Activated T-helper 2 cell treated with anti-CD3 and anti-CD28 coated beads, Interferon-gamma antibody, Interleukin-2, Interleukin-4, amounts not matched to agents 10 μg/mL and 5 μg/mL and 100 μg/mL, durations not matched to agents 14 hours and 24 hours and 36 hours (primary cell): ENCODE measurements at regions of chr1 and their contacts with region 1.

Region 1: DNA sequence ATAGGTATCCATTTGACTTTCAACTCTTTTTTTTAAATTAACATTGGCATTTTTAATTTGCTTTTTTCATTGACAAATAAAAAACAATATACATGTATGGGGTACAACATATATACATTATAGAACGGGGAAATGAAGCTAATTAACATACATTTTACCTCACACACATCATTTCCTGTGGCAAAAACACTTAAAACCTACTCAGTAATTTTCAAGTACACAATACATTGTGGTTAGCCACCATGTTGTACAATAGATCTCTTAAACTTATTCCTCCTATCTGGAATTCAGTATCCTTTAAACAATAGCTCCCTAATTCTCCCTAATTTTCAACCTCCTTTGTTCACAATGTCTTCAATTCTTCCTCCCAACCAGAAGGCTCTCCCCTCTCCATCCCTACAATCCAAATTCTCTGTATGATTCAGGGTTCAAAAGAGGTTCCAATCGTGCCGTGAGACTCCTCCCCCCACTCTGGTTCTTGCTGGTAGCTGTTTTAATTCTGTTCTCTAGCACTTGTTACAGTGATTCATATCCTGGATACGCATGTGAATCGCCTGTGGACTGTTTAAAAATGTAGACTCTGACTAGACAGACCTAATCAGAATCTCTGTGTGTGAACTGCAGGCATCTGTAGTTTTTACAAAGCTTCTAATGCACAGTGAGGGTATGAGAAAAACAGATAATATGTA is 87.6 kb upstream of the DUSP10 start:
- DNase-seq: peak; percentile 40
- H3K4me3 Mint-ChIP-seq: peak overlapping the region; percentile 67
- H3K27ac Mint-ChIP-seq: peak overlapping the region; percentile 97
- H3K4me1 Mint-ChIP-seq: peaks cover 70% of the 10 kb centered on the region
- H3K27me3 Mint-ChIP-seq: no peaks in the 10 kb centered on the region

Region 2: DNA sequence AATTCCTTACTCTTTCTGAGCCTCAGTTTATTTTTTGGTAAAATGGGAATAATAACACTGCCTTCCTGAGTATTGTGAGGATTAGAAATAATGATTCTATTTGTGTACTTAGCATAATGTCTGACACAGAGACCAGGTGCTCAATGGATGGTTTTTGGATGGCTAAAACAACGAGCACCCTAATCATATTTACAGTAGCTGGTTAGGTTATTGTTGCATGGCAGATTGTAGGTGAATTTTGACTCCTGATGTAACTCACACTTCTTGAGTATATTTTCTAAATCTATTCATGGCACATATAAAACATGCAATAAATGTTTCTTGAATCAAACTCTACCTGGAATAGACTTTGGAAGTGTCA is 75.7 kb before region 1 on chr1:
- intact Hi-C with region 1: loop called (anchors 1 kb)
- DNase-seq: no peak
- H3K4me3 Mint-ChIP-seq: peak overlapping the region; percentile 28
- H3K27ac Mint-ChIP-seq: peak overlapping the region; percentile 81
- H3K4me1 Mint-ChIP-seq: peaks cover 50% of the 10 kb centered on the region
- H3K27me3 Mint-ChIP-seq: no peaks in the 10 kb centered on the region

Region 3: DNA sequence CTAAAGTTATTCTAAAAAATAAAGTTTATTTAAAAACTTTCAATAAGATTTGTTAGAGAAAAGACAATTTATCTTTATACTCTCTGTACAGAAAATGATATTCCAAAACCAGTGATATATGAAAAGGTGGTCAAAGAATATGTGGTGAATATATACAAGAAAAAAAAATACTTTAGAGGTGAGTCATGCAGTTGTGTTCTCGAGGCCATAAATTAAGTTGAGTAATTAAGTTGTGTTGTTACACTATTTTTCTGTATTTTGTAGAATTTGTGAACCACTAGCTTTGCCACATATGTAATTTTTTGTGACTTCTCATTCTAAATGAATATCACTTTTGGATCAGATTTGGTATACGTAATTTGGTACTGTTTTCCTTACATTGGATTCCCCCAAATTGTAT is 63.9 kb before region 1 on chr1:
- intact Hi-C with region 1: no loop called
- DNase-seq: no peak
- H3K4me3 Mint-ChIP-seq: no peak overlapping the region
- H3K27ac Mint-ChIP-seq: no peak overlapping the region
- H3K4me1 Mint-ChIP-seq: peaks cover 33% of the 10 kb centered on the region
- H3K27me3 Mint-ChIP-seq: no peaks in the 10 kb centered on the region

Region 4: GRCh38 chr1:221809031-221810029 is 20.1 kb before region 1 on chr1:
- intact Hi-C with region 1: loop called (anchors 2 kb)
- DNase-seq: no peak
- H3K4me3 Mint-ChIP-seq: no peak overlapping the region
- H3K27ac Mint-ChIP-seq: peak overlapping the region; percentile 81
- H3K4me1 Mint-ChIP-seq: peaks cover 43% of the 10 kb centered on the region
- H3K27me3 Mint-ChIP-seq: peaks cover 4% of the 10 kb centered on the region

Region 5: DNA sequence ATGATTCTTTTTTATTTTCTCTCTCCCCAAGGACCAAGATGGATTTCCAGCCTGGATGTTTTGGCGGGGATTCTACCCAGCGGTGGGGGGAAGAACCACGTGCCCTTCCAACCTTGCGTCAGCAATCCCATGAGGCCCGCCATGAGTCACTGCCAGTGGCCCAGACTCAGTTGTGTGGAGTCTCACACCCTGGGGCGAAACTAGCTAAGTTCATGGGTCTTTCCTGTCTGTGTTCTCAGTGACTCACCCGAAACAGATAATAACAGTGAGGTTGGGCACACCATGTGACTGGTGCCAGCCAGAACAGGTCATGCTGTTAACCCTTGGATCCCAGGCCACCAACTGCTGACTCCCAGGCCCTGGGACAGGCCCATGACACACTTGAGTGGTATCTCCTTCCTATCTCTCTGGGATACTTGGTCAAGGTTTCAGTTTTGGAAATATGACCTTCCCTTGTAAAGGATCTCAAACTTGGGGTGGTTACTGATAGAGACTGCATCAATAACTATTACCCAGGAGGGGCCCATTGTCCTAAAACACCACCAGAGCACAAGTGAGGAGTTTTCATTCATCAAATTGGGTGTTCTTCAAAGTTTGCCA is 10.4 kb after region 1 on chr1:
- intact Hi-C with region 1: loop called (anchors 1 kb)
- DNase-seq: peak; percentile 33
- H3K4me3 Mint-ChIP-seq: no peak overlapping the region
- H3K27ac Mint-ChIP-seq: peak overlapping the region; percentile 60
- H3K4me1 Mint-ChIP-seq: peaks cover 48% of the 10 kb centered on the region
- H3K27me3 Mint-ChIP-seq: peaks cover 4% of the 10 kb centered on the region

Region 6: GRCh38 chr1:221886743-221887413 is 57.4 kb after region 1 on chr1:
- intact Hi-C with region 1: no loop called
- DNase-seq: no peak
- H3K4me3 Mint-ChIP-seq: no peak overlapping the region
- H3K27ac Mint-ChIP-seq: no peak overlapping the region
- H3K4me1 Mint-ChIP-seq: peaks cover 2% of the 10 kb centered on the region
- H3K27me3 Mint-ChIP-seq: peaks cover 27% of the 10 kb centered on the region

Region 7: DNA sequence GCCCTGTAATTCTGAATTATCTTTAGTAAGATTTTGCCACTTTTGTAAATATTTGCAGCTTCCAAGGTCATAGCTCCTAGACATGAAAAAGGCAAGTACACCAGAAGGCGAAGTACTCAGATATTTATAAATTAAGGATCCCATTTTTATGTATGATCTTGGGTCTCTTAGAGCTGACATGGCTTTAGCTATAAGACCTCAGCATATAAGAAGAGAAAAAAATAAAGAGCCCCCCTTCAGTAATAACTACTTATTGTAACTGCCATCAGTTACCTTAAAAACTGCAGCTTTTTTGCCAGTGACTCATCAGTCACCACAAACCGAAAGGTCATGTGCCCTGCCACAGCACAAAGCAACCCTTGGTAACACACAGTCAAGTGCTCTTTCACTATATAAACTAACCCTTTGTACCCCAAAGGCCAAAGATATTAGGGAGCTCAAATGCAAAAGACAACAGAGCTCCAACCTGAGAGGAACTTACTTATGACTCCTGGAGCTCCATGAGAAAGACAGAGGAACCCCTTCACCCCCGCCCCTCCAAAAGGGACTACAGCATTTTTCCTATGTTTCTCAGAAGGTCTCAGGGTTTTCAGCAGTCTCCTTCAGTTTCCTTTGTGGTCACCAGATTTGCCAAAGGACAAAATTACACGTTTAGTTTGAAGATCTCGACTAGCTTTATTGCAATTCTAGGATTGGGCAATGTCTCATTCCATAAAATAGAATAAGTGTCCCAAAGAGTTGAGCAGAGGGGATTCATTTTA is 132.2 kb after region 1 on chr1:
- intact Hi-C with region 1: loop called (anchors 5 kb)
- DNase-seq: peak; percentile 37
- H3K4me3 Mint-ChIP-seq: no peak overlapping the region
- H3K27ac Mint-ChIP-seq: peak overlapping the region; percentile 4
- H3K4me1 Mint-ChIP-seq: peaks cover 21% of the 10 kb centered on the region
- H3K27me3 Mint-ChIP-seq: no peaks in the 10 kb centered on the region

Region 8: GRCh38 chr1:221994274-221994698 is 164.8 kb after region 1 on chr1:
- intact Hi-C with region 1: loop called (anchors 1 kb)
- DNase-seq: peak; percentile 8
- H3K4me3 Mint-ChIP-seq: no peak overlapping the region
- H3K27ac Mint-ChIP-seq: peak overlapping the region; percentile 96
- H3K4me1 Mint-ChIP-seq: peaks cover 45% of the 10 kb centered on the region
- H3K27me3 Mint-ChIP-seq: no peaks in the 10 kb centered on the region